PC-9 (cell line): ENCODE measurements at regions of chr2 and their contacts with region 1.

Region 1: DNA sequence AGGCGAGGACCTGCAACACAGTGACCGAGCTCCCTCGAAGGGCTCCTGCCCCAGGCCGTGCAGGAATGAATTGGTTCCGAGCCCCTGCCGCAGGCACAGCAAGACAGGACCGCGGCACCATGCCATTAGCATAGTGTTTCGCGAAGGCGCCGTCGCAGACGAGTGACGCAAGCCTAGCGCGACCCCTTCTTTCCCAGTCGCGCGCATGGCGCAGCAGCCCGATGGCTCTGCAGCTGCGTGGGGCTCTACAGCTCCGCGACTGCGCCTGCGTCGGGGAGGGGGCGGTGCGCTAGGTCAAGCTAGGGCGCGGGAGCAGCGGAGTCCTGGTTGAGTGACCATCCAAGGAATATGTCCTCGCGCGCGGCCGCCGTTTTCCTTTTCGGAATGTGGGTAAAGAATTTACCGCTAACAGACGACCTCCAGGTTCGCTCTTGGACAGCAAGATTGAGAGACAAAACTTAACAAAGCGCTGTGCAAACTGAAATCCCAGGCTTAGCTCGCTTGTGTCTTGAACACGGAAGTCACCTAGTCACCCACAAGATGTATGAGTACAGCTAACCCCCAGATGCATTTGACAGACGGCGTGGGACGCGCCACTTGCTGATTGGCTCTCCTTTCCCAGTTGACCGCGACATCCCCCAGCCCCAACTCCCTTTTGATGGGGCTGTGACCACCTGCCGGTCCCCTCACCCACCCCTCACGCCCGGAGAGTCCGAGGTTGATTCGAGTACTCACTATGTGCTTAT is at the start of gene TRMT61B:
- DNase-seq: peak; percentile 90 to 95
- H3K4me3 ChIP-seq: peak within 1 kb of the TSS; percentile 80
- H3K27ac ChIP-seq: peak within 1 kb of the TSS; percentile 46; the same call in 1 of the 2 replicates
- H3K4me1 ChIP-seq: peaks cover 16% of the 10 kb centered on the region
- H3K27me3 ChIP-seq: no peaks in the 10 kb centered on the region
- CTCF ChIP-seq: no peak
- total RNA-seq, gene TRMT61B: 15.7 and 21.1 TPM in 2 replicates

Region 2: DNA sequence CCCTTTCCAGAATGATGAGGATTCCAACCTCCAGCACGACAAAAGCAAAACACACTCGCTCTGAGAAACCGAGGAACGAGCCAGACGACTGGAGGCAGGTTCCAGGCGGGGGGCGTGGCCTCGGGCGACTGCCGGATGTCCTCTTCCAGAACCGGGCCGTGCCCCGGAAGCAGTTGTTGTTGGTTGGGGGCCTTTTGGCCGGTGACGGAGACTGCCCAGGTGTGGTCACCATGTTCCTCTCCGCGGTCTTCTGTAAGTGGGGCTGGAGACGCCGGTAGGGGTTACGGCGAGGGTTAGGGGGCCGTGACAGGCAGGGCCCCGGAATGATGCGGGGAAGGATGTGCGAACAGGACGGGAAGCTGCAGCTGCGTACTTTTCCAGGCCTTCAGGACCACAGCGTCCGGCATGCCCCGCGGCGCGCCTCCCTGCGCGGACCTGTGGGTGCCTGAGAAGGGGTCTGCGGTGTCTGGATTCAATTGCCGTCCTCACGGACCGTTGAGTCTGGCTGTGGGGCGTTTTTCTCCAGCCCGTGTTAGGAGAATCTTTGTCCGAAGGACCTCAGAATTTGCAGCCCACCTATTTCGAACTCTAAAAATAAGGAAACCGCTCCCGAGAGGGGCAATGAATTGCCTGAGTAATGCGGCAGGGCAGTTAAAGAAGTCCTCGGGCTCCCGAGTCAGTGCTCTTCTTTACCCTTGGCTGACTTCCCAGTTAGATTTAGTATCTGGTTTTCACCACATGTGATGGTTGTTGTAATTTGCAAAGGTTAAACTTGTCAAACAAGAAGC is 1098.6 kb before region 1 on chr2 and contains the start of gene MRPL33:
- CTCF ChIA-PET with region 1: no interaction called
- POLR2A ChIA-PET with region 1: interaction called, 10 read pairs
- intact Hi-C with region 1: no loop called
- DNase-seq: peak; percentile 86 to 93
- H3K4me3 ChIP-seq: peak within 1 kb of the TSS; percentile 93
- H3K27ac ChIP-seq: peak within 1 kb of the TSS; percentile 80
- H3K4me1 ChIP-seq: peaks cover 37% of the 10 kb centered on the region
- H3K27me3 ChIP-seq: no peaks in the 10 kb centered on the region
- CTCF ChIP-seq: no peak
- total RNA-seq, gene MRPL33: 81.9 and 86.3 TPM in 2 replicates

Region 3: GRCh38 chr2:28821295-28821958 is 48.9 kb before region 1 on chr2:
- CTCF ChIA-PET with region 1: no interaction called
- POLR2A ChIA-PET with region 1: no interaction called
- intact Hi-C with region 1: no loop called
- DNase-seq: peak; percentile 45 to 50
- H3K4me3 ChIP-seq: no peak overlapping the region
- H3K27ac ChIP-seq: 0 out of 2 replicates have a peak overlapping the region, but pooled peaks have one; percentile 1
- H3K4me1 ChIP-seq: no peaks in the 10 kb centered on the region
- H3K27me3 ChIP-seq: no peaks in the 10 kb centered on the region
- CTCF ChIP-seq: peak; percentile 81